Activated CD8-positive, alpha-beta memory T cell treated with anti-CD3 and anti-CD28 coated beads, Interleukin-2, amount 10 ng/mL, durations not matched to agents 7 days and 5 days (primary cell): ENCODE measurements at regions of chr3 and their contacts with region 1.

Region 1: DNA sequence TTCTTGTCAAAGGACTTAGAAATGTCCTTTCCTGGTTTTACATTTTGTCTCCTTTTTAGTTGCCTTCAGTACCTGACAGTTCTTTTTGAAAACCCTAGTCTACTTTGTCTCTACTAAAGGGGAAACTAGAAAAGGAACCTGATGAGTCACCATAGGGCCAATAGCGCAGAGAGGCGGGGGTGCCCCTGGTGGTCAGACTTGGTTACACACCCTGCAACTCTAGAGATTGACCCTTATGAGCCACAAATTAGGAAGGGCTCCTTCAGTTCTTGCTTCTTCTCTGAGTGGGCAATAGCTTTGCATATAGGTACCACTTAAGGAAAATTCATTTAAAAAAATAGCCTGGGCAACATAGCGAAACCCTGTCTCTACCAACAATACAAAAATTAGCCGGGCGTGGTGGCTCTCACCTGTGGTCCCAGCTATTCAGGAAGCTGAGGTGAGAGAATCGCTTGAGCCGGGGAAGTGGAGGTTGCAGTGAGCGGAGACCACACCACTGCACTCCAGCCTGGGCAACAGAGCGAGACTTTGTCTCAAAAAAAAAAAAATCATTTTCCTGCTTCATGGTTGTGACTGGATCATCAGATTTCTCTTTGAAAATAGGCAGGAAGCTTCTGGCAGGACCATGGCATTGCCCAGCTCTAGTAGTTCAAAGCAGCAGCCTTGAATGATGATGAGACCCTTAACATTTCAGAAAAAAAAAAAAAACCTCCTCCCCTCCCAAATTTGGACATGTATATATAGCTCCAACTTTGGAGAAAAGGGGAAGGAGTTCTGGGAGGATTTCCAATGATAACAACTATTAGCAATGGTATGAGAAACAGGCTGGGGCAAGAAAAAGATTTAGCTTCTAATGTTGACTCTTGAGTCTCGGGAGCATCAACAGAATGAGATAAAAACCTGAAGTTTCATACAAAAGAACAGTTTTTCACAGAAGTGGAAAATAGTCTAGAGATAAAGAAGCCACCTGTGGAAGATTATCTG is 45.2 kb upstream of the RASA2 start:
- DNase-seq: peak; percentile 90
- ATAC-seq: peak; percentile 100
- H3K4me3 Mint-ChIP-seq: peak overlapping the region; percentile 60
- H3K27ac Mint-ChIP-seq: peak overlapping the region; percentile 92
- H3K4me1 Mint-ChIP-seq: peaks cover 36% of the 10 kb centered on the region
- H3K27me3 Mint-ChIP-seq: no peaks in the 10 kb centered on the region

Region 2: DNA sequence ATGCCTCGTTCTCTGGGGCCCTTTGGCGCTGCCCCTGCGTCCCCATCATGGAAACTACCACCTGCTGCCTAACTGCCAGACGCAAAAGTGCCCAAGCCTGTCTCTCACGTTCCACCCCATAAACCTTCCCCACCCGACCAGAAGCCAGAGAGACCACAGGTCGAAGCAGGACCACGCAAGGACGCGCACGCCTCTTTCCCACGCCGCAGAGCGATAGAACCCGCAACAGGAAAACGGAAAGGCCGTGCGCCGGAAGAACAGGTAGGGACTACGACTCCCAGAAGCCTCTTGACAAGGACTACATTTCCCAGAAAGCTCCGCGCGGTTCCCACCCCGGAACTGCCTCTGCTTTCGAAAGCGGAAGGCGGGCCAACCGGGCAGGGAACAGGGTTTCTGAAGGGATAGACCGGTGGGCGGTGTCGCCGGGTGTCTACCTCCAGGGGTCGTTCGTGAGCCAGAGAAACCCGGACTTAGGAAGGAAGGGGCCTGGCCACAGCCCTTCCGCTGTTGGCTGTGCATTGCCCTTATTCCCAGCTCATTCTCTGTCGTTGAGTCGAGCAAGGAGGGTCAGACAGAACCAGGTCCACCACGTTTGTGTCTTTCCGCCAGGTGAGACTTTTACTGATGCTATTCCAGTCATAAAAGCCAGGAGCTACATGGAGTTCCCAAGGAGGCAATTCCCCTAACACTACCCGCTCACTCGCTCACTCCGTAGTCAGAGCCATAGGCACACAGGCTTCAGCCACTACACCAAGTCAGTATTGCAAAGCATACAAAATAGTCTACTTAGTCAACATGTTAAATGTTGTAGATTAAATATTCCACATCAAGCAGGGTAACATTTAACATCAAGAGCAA is 129.9 kb before region 1 on chr3:
- CTCF ChIA-PET with region 1: interaction called, 39 read pairs
- DNase-seq: peak; percentile 100
- ATAC-seq: peak; percentile 95
- H3K4me3 Mint-ChIP-seq: peak overlapping the region; percentile 91
- H3K27ac Mint-ChIP-seq: peak overlapping the region; percentile 98
- H3K4me1 Mint-ChIP-seq: peaks cover 44% of the 10 kb centered on the region
- H3K27me3 Mint-ChIP-seq: no peaks in the 10 kb centered on the region

Region 3: DNA sequence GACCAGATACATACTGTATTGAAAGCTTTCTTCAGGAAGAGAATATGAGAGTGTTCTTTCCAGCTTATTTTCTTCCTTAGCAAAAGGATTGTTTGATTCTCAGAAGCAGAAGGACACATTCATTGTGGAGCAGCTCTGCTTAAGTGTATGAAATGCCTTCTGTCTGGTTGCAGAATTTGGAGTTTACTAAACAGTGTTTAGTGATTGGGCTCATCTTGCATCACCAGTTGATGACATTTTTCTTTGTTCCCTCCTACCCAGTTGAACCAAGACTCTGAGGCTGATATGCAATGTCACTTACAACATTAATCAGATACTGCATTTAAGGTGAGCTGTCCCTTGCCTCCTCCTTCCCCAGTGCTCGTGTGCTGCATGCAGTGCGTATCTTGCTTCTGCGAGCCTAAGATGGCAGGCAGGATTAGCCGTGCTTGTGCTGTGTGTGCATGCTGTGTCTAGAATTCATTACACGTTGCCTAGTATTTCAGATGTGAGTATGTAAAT is 55.0 kb before region 1 on chr3:
- CTCF ChIA-PET with region 1: interaction called, 16 read pairs
- DNase-seq: no peak
- ATAC-seq: no peak
- H3K4me3 Mint-ChIP-seq: peak overlapping the region; percentile 18
- H3K27ac Mint-ChIP-seq: peak overlapping the region; percentile 20
- H3K4me1 Mint-ChIP-seq: peaks cover 57% of the 10 kb centered on the region
- H3K27me3 Mint-ChIP-seq: no peaks in the 10 kb centered on the region

Region 4: GRCh38 chr3:141412087-141412935 is 29.4 kb before region 1 on chr3:
- CTCF ChIA-PET with region 1: interaction called, 44 read pairs
- DNase-seq: peak; percentile 78
- ATAC-seq: peak; percentile 43
- H3K4me3 Mint-ChIP-seq: peak overlapping the region; percentile 75
- H3K27ac Mint-ChIP-seq: peak overlapping the region; percentile 99
- H3K4me1 Mint-ChIP-seq: peaks cover 80% of the 10 kb centered on the region
- H3K27me3 Mint-ChIP-seq: no peaks in the 10 kb centered on the region

Region 5: GRCh38 chr3:141460097-141460704 is 18.5 kb after region 1 on chr3:
- CTCF ChIA-PET with region 1: interaction called, 30 read pairs
- DNase-seq: peak; percentile 93
- ATAC-seq: peak; percentile 99
- H3K4me3 Mint-ChIP-seq: no peak overlapping the region
- H3K27ac Mint-ChIP-seq: no peak overlapping the region
- H3K4me1 Mint-ChIP-seq: peaks cover 20% of the 10 kb centered on the region
- H3K27me3 Mint-ChIP-seq: no peaks in the 10 kb centered on the region